ENCODE measurements at regions of chr4 and their contacts with region 1.

Region 1: GRCh38 chr4:105758958-105759357 is 50.4 kb downstream of the GSTCD start:
- DNase-seq: peak; percentile 32
- ATAC-seq: peak; percentile 53; the same call in 1 of the 2 replicates
- H3K4me3 ChIP-seq: no peak overlapping the region
- H3K27ac ChIP-seq: no peak overlapping the region
- H3K4me1 ChIP-seq: no peaks in the 10 kb centered on the region
- H3K27me3 ChIP-seq: no peaks in the 10 kb centered on the region
- CTCF ChIP-seq: no peak
- POLR2A ChIP-seq: no peak
- RAD21 ChIP-seq: no peak

Region 2: DNA sequence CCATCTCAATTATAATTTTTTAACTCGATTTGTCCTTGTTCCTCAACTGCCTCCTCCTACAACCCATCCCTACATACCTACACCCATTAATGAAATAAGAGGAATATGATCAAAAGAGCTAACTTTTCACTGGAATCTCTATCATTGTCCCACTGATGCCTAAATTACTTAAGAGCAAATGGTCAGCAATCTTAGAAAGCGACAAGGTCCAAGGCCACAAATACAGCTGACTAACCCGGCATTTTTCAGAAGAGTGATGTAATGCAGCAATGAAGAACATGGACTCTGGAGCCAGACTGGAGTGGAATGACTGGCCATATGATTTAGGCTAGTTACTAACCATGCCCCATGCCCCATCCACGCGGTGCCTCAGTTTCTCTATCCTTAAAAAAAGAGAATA is 341.3 kb before region 1 on chr4:
- CTCF ChIA-PET with region 1: no interaction called
- POLR2A ChIA-PET with region 1: interaction called, 17 read pairs
- dilution Hi-C with region 1: no loop called
- in situ Hi-C with region 1: no loop called
- intact Hi-C with region 1: no loop called
- DNase-seq: peak; percentile 10
- ATAC-seq: no peak
- H3K4me3 ChIP-seq: no peak overlapping the region
- H3K27ac ChIP-seq: no peak overlapping the region
- H3K4me1 ChIP-seq: no peaks in the 10 kb centered on the region
- H3K27me3 ChIP-seq: no peaks in the 10 kb centered on the region
- CTCF ChIP-seq: no peak
- POLR2A ChIP-seq: no peak
- RAD21 ChIP-seq: no peak

Region 3: DNA sequence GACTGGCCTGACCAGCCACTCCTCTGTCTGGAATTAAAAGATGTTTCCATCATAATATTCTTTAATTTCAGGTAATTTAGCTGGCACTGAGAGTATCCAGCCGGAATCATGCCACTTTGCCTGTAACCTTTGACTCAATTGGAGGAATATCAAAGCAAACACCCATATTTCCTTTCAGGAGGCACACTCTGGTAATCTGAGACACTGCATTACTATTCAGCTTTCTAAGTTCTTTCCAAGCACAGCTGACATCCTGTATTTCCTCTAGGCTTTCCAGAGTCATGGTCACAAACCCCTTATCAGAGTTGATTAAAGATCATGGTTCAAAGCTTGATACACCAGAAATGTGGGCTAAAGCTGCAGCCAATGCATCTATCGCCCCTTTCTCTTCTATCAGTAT is 79.8 kb before region 1 on chr4:
- CTCF ChIA-PET with region 1: no interaction called
- POLR2A ChIA-PET with region 1: no interaction called
- dilution Hi-C with region 1: no loop called
- in situ Hi-C with region 1: no loop called
- intact Hi-C with region 1: no loop called
- DNase-seq: no peak
- ATAC-seq: no peak
- H3K4me3 ChIP-seq: no peak overlapping the region
- H3K27ac ChIP-seq: no peak overlapping the region
- H3K4me1 ChIP-seq: no peaks in the 10 kb centered on the region
- H3K27me3 ChIP-seq: no peaks in the 10 kb centered on the region
- CTCF ChIP-seq: no peak
- POLR2A ChIP-seq: no peak
- RAD21 ChIP-seq: no peak

Region 4: DNA sequence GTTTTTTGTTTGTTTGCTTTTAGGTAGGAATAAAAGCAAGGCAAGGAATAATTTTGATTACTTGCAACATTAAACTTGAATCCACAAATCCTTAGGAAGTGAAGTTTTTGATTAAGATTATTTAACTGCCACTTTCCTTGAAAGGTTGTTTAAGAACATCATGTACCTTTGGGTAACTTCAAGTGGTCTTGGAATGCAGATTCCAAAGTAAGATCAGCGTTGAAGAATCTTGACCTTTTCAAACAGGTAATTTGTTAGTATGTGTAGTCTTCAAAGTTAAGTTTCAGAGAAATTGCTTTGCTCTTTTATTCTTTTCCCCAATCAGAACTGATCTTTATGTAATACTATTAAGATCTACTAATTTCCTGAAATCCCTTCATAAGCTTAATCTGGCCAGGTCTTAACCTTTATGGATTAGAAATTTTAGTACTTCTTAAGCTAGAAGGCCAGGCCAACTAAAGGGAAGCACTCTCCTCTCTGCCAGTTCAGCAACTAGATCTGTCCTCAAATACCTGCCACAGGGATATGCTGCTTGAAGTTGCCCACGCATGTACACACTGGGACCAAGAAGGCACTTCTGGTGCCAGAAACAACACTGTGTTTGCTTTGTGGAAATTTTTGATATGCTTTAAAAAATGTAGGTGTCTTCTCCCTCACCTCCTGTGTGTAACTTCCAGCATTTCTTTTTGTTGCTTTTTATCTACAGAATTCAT is 143.7 kb after region 1 on chr4:
- CTCF ChIA-PET with region 1: no interaction called
- POLR2A ChIA-PET with region 1: no interaction called
- dilution Hi-C with region 1: no loop called
- in situ Hi-C with region 1: no loop called
- intact Hi-C with region 1: no loop called
- DNase-seq: no peak
- ATAC-seq: no peak
- H3K4me3 ChIP-seq: no peak overlapping the region
- H3K27ac ChIP-seq: no peak overlapping the region
- H3K4me1 ChIP-seq: no peaks in the 10 kb centered on the region
- H3K27me3 ChIP-seq: peaks cover 10% of the 10 kb centered on the region
- CTCF ChIP-seq: no peak
- POLR2A ChIP-seq: no peak
- RAD21 ChIP-seq: no peak

Region 5: DNA sequence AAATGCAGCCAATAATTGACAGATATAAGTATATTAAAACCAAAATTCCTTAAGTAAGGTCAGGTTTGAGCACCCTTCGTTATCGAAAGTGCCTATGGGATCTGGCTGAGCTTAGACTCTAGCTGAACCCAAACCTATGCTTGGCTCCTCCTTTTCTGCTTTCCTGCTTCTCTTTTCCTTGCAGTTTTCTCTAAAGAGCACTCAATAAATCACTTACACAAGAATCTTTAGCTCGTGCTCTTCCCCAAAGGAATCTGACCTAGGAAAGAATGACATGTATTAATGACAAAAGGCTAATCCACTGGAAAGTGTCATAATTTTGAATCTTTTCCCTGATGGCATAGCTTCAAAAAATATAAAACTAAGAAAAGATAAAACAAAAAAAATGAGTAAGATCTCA is 994.5 kb after region 1 on chr4:
- CTCF ChIA-PET with region 1: no interaction called
- POLR2A ChIA-PET with region 1: no interaction called
- dilution Hi-C with region 1: no loop called
- in situ Hi-C with region 1: no loop called
- intact Hi-C with region 1: no loop called
- DNase-seq: no peak
- ATAC-seq: no peak
- H3K4me3 ChIP-seq: no peak overlapping the region
- H3K27ac ChIP-seq: no peak overlapping the region
- H3K4me1 ChIP-seq: no peaks in the 10 kb centered on the region
- H3K27me3 ChIP-seq: no peaks in the 10 kb centered on the region
- CTCF ChIP-seq: no peak
- POLR2A ChIP-seq: no peak
- RAD21 ChIP-seq: no peak